Colonic mucosa (tissue), 4 donors: ENCODE measurements at regions of chr2 and their contacts with region 1.

Region 1: DNA sequence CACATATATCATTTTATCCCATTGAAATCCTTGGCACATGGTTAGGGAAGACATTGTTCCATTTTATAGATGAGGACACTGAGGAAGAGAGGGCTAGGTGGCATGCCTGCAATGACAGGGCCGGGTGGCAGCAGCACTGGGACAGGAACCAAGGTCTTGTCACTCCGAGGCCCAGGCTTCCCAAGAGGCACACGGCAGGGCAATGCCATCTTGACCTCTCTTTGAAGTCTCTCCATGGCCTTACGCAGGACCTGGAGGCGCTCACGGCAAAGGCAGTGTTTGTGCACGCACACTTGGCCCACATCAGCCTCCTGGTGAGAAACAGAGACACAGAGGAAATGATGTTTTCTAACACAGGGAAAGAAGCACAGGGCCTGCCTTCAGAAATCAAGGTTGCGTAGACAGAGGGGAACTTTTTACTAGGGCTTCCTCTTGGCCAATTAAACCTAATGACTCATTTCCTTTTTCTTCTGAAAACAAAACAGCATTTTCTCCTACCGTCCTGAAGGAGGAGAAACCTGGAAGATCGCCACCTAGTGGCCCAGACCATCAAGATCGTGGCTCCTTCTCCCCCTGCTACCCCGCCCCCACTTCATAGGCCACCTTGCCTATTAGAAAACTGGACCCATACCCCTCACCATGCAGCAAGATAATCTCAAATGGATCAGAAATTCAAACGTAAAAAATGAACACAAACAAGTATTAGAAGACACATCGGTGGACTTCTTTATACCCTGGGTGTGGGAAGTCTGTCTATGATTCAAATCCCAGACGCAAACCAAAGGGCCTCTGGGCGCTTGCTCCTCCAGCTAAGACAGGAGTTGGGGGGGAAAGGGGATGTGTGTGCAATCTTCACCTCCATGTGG is 74.6 kb upstream of the SP3 start:
- DNase-seq: peak; percentile 91
- H3K4me3 ChIP-seq: no peak overlapping the region
- H3K27ac ChIP-seq: peak overlapping the region; percentile 83
- H3K4me1 ChIP-seq: no peaks in the 10 kb centered on the region
- H3K27me3 ChIP-seq: no peaks in the 10 kb centered on the region
- CTCF ChIP-seq: peak; percentile 90

Region 2: DNA sequence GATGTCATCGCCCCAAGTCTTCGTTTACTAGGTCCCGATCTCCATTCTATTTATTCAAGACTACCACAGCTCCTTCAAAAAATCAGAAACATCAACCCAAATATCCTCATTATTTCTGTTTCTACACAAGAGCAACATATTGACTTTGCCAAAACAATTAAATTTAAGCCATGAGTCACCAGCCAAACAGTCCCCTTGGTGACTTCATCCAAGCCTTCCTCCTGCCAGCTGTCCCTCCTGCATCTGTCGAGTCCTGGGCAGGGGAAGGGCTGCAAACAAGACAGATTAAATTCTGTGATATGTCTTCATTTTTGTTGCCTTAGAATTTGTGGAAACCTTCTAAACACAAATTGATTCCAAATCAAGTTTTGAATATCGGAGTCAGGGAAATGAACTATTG is 184.9 kb before region 1 on chr2:
- intact Hi-C with region 1: no loop called
- DNase-seq: no peak
- H3K4me3 ChIP-seq: no peak overlapping the region
- H3K27ac ChIP-seq: no peak overlapping the region
- H3K4me1 ChIP-seq: no peaks in the 10 kb centered on the region
- H3K27me3 ChIP-seq: no peaks in the 10 kb centered on the region
- CTCF ChIP-seq: no peak

Region 3: DNA sequence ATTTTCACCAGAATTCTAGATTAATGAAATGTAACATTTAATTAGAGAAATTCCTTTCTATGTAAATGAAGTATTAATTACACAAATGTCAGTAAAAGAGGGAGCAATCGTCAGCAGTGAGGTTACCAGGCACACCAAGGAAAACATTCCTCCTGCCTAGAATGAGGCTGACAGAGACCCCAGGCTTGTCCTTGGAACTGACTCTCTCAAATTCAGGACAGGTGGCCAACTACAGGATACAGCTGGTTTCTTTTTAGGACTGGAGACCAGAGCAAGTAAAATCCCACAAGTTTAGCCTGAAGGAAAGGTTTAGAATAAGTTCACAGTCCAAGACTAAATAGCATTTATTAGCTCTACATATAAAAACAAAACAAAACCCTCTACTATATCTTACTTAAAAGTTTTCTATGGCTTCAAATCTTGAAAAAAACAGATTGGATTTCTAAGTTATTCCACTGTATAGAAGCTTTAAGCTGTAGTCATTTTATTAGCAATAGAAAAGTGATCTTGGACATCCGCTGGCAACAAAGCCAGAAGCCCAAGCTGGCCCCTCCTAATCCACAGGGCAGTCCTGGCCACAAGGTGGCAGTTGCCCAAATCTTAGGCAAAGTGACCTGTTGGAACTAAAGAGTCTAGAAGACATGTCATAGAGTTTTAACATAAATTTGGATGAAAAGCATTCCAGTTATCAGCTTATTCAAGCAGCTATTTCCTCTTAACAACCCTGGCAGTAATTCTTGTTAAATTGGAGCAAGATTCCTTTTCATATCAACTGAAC is 155.6 kb before region 1 on chr2:
- intact Hi-C with region 1: loop called (anchors 10 kb)
- DNase-seq: peak; percentile 34
- H3K4me3 ChIP-seq: no peak overlapping the region
- H3K27ac ChIP-seq: no peak overlapping the region
- H3K4me1 ChIP-seq: no peaks in the 10 kb centered on the region
- H3K27me3 ChIP-seq: no peaks in the 10 kb centered on the region
- CTCF ChIP-seq: peak; percentile 55

Region 4: DNA sequence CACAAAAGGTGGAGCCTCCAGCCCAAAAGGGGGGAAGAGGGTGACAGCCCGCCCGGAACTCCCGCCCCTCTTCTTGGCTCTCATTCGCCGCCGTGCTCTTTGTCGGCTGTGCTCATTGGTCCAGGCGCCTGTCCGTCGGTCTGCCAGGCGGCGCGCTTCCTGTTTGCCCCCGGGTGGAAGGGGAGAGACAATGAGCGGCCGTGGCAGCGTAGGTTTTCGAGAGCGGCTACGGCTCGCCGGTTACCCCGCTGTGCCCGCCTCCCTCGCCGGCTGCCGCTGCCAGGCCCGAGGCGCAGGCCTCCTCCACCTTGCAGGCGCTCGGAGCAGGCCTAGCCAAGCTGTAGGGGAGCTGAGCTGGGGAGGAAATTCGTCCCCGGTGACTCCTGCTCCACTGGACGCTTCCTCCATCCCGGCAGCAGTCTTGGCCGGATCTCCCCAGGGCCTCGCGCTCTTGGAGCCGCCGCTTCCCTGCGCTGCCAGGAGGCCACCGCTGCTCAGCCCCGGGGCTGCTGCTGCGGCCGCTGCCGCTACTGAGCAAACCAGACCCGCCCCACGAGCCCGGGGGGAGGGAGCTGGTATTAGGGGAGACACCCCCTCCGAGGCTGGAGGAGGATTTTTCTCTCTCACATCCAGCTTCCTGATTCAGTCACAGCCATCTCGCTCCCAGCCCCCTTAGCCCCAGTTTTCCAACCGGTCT is 74.3 kb before region 1 on chr2 and contains the start of gene SP3:
- intact Hi-C with region 1: loop called (anchors 10 kb)
- DNase-seq: peak; percentile 97
- H3K4me3 ChIP-seq: peak within 1 kb of the TSS; percentile 90
- H3K27ac ChIP-seq: peak within 1 kb of the TSS; percentile 99
- H3K4me1 ChIP-seq: peaks cover 10% of the 10 kb centered on the region
- H3K27me3 ChIP-seq: no peaks in the 10 kb centered on the region
- CTCF ChIP-seq: no peak
- total RNA-seq, gene SP3: 77.0 to 99.0 TPM

Region 5: DNA sequence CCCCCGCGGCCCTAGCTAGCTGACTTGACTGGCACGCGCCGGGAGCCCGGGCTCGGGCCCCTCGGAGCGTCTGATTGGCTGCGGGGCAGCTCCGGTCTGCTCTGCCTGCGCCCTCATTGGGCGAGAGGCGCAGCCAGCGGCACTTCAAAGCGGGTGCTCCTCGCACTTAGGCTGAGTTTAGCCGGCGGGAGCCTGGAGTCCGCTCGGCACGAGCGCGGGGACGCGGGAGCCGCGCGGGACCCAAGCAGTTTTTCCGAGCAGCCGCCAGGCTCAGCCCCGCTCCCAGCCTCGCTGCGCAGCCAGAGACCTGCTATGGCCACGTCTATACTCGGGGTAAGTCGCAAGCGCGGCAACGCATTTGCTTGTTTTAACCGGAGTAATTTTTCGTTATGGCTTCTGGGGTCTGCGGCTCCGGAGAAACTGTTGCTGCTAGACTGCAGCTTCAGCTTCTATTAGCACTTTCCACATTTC is 295.0 kb after region 1 on chr2 and contains the start of gene SP9:
- intact Hi-C with region 1: no loop called
- DNase-seq: no peak
- H3K4me3 ChIP-seq: no peak within 1 kb of the TSS
- H3K27ac ChIP-seq: no peak within 1 kb of the TSS
- H3K4me1 ChIP-seq: peaks cover 30% of the 10 kb centered on the region
- H3K27me3 ChIP-seq: peaks cover 96% of the 10 kb centered on the region
- CTCF ChIP-seq: no peak
- total RNA-seq, gene SP9: not detected